ENCODE measurements at regions of chr1 and their contacts with region 1.

Region 1: GRCh38 chr1:32032275-32032615 is 18.6 kb downstream of the KHDRBS1 start:
- DNase-seq: no peak
- H3K4me3 ChIP-seq: no peak overlapping the region
- CTCF ChIP-seq: no peak

Region 2: GRCh38 chr1:32042330-32042729 is 10.1 kb after region 1 on chr1:
- CTCF ChIA-PET with region 1: interaction called, 10 read pairs
- POLR2A ChIA-PET with region 1: no interaction called
- DNase-seq: no peak
- H3K4me3 ChIP-seq: no peak overlapping the region
- CTCF ChIP-seq: no peak

Region 3: GRCh38 chr1:32072622-32073298 is 40.5 kb after region 1 on chr1 and contains the start of gene TMEM39B:
- CTCF ChIA-PET with region 1: no interaction called
- POLR2A ChIA-PET with region 1: no interaction called
- DNase-seq: no peak
- H3K4me3 ChIP-seq: peak within 1 kb of the TSS; percentile 95
- CTCF ChIP-seq: no peak

Region 4: DNA sequence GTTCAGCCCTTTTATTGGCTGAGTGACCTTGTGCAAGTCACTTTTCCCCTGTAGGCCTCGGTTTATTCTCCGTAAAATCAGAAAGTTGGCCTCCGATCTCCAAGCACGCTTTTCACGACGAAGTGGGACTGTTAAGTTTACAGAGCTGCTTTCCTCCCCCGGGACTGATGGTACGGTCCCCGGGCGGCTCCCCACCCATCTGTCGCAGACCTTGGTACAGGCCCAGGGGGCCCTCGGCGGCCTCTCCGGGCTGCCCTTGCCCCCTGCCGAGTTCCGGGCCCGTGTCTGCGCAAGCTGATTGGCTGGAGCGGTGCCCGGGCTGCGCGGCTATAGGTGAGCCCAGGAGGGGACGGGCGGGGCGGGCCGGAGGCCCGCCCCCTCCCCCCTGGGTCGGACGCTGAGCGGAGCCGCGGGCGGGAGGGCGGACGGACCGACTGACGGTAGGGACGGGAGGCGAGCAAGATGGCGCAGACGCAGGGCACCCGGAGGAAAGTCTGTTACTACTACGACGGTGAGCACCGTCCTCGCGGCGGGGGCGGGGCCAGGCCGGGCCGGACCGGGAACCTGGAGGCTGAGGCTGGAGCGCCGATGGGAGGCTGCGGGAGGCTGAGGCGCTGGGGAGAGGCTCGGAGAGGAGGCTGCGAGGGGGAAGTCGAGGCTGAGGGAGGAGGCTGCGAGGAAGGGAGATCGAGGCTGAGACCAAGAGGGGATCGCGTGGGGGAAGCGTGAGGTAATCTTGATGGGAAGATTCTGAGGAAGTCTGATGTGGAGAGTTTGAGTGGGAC is 259.7 kb after region 1 on chr1 and contains the start of gene HDAC1:
- CTCF ChIA-PET with region 1: no interaction called
- POLR2A ChIA-PET with region 1: no interaction called
- DNase-seq: peak; percentile 49
- H3K4me3 ChIP-seq: peak within 1 kb of the TSS; percentile 97
- CTCF ChIP-seq: no peak